Esophagus muscularis mucosa (tissue), 4 donors: ENCODE measurements at regions of chr19 and their contacts with region 1.

Region 1: GRCh38 chr19:3057306-3057714 is 5.0 kb downstream of the TLE5 start:
- DNase-seq: no peak
- H3K4me3 ChIP-seq: peak overlapping the region; percentile 2 to 25 (median 10)
- H3K27ac ChIP-seq: peak overlapping the region; percentile 81 to 99 (median 99)
- H3K4me1 ChIP-seq: peaks cover 57 to 76% (median 70%) of the 10 kb centered on the region in 4 donors
- H3K27me3 ChIP-seq: no peaks in the 10 kb centered on the region
- CTCF ChIP-seq: peak in 2 of 3 experiments; percentile 14 to 27
- EP300 ChIP-seq: no peak
- POLR2A ChIP-seq: no peak

Region 2: GRCh38 chr19:2962045-2962561 is 95.2 kb before region 1 on chr19:
- intact Hi-C with region 1: loop called (anchors 5 kb)
- DNase-seq: peak; percentile 95
- H3K4me3 ChIP-seq: peak overlapping the region in 2 of 4 donors; percentile 24 to 42
- H3K27ac ChIP-seq: no peak overlapping the region
- H3K4me1 ChIP-seq: peaks cover 3 to 6% (median 5%) of the 10 kb centered on the region in 4 donors
- H3K27me3 ChIP-seq: no peaks in the 10 kb centered on the region
- CTCF ChIP-seq: peak; percentile 69 to 92 (median 73)
- EP300 ChIP-seq: no peak
- POLR2A ChIP-seq: no peak

Region 3: DNA sequence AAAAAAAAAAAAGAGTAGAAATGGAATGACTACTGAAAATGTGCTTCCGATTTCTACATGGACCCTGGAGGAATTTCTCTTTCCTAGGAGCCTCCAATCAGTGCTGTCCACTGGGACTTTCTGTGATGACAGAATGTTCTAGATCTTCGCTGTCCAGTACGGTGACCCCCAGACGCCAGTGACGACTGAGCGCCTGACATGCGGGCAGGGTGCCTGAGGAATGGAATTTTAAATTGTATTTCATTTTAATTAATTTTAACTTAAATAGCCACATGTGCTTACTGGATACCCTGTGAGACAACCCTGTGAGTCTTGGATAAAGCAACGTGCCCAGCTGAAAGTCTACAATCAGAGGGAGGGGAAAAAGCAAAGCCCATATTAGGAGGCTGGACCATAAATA is 84.1 kb before region 1 on chr19:
- intact Hi-C with region 1: no loop called
- DNase-seq: no peak
- H3K4me3 ChIP-seq: no peak overlapping the region
- H3K27ac ChIP-seq: peak overlapping the region; percentile 81 to 88 (median 86)
- H3K4me1 ChIP-seq: peaks cover 83 to 100% (median 100%) of the 10 kb centered on the region in 4 donors
- H3K27me3 ChIP-seq: no peaks in the 10 kb centered on the region
- CTCF ChIP-seq: no peak
- EP300 ChIP-seq: peak; percentile 85
- POLR2A ChIP-seq: no peak

Region 4: GRCh38 chr19:2983351-2984195 is 73.7 kb before region 1 on chr19:
- intact Hi-C with region 1: loop called (anchors 5 kb)
- DNase-seq: no peak
- H3K4me3 ChIP-seq: peak overlapping the region; percentile 44 to 60 (median 49)
- H3K27ac ChIP-seq: peak overlapping the region; percentile 85 to 92 (median 90)
- H3K4me1 ChIP-seq: peaks cover 33 to 40% (median 34%) of the 10 kb centered on the region in 4 donors
- H3K27me3 ChIP-seq: no peaks in the 10 kb centered on the region
- CTCF ChIP-seq: no peak
- EP300 ChIP-seq: no peak
- POLR2A ChIP-seq: no peak

Region 5: GRCh38 chr19:3154957-3155736 is 97.8 kb after region 1 on chr19:
- intact Hi-C with region 1: no loop called
- DNase-seq: no peak
- H3K4me3 ChIP-seq: no peak overlapping the region
- H3K27ac ChIP-seq: peak overlapping the region in 2 of 4 donors; percentile 14 to 42
- H3K4me1 ChIP-seq: peaks cover 0 to 9% (median 4%) of the 10 kb centered on the region in 4 donors
- H3K27me3 ChIP-seq: peaks cover 0 to 16% (median 0%) of the 10 kb centered on the region in 4 donors
- CTCF ChIP-seq: no peak
- EP300 ChIP-seq: peak; percentile 47
- POLR2A ChIP-seq: no peak